ENCODE measurements at regions of chr7 and their contacts with region 1.

Region 1: GRCh38 chr7:112422842-112423496 is 27.3 kb upstream of the IFRD1 start:
- DNase-seq: peak; percentile 90
- H3K4me3 ChIP-seq: no peak overlapping the region
- H3K27ac ChIP-seq: peak overlapping the region; percentile 26
- H3K4me1 ChIP-seq: peaks cover 41% of the 10 kb centered on the region
- H3K27me3 ChIP-seq: no peaks in the 10 kb centered on the region
- CTCF ChIP-seq: no peak

Region 2: DNA sequence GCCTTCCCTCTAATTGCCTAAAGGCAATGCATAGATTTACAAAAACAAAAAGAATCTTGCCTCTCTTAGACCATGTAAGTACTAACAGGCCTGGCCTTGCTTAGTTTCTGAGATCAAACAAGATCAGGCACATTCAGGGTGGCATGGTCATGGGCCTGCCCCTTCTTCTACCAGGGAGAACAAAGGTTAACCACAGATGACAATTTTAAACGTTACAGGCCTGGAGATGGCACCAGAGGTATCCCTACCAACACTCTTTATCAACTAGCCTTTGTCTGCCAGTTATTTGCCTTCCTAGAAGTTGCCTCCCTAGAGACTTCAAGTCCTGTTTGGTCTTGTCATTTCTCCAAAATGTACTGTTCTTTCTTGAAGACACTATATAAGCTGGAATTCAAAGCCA is 469.4 kb before region 1 on chr7:
- CTCF ChIA-PET with region 1: interaction called, 11 read pairs
- dilution Hi-C with region 1: no loop called
- in situ Hi-C with region 1: loop called in 1 of 2 experiments (anchors 25 kb)
- intact Hi-C with region 1: no loop called
- DNase-seq: peak; percentile 92
- H3K4me3 ChIP-seq: no peak overlapping the region
- H3K27ac ChIP-seq: peak overlapping the region; percentile 73
- H3K4me1 ChIP-seq: peaks cover 13% of the 10 kb centered on the region
- H3K27me3 ChIP-seq: no peaks in the 10 kb centered on the region
- CTCF ChIP-seq: peak; percentile 20 to 58

Region 3: GRCh38 chr7:111958896-111959295 is 464.1 kb before region 1 on chr7:
- CTCF ChIA-PET with region 1: interaction called, 11 read pairs
- dilution Hi-C with region 1: no loop called
- in situ Hi-C with region 1: loop called in 1 of 2 experiments (anchors 25 kb)
- intact Hi-C with region 1: no loop called
- DNase-seq: peak; percentile 30
- H3K4me3 ChIP-seq: no peak overlapping the region
- H3K27ac ChIP-seq: no peak overlapping the region
- H3K4me1 ChIP-seq: peaks cover 14% of the 10 kb centered on the region
- H3K27me3 ChIP-seq: no peaks in the 10 kb centered on the region
- CTCF ChIP-seq: no peak

Region 4: DNA sequence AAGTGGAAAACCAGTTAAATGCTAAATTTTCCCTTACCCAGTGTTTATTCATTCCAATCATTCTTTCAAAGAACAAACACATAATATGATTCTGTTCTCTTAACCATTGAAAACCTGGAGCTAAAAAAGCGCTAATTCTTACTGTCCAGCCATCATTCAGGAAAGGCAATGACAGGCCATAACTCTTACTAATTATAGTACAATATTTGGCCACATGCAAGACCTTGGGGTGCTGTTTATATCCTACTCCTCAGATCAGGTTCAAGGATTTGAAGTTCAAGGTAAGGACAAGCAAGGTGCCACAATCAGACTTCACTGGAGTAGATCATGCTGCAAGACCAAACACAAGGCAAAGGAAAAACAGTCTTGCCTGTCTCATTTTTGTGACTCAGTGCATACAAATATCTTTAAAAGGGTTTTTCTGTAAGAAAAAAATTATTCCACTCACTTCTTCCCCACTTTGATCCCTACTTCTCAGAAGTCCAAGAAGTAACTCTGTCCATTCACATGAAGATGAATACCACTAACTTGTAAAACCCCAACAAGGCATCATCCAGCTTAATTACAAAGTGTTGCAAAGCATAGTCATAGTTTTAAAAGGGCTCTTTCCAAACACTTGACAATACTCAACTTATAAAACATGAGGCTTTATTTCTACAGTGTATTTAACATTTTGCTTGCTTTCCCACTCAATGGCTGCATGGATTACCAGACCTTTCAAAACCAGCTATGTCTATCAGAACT is 369.8 kb before region 1 on chr7:
- CTCF ChIA-PET with region 1: no interaction called
- dilution Hi-C with region 1: no loop called
- in situ Hi-C with region 1: no loop called
- intact Hi-C with region 1: no loop called
- DNase-seq: no peak
- H3K4me3 ChIP-seq: no peak overlapping the region
- H3K27ac ChIP-seq: no peak overlapping the region
- H3K4me1 ChIP-seq: no peaks in the 10 kb centered on the region
- H3K27me3 ChIP-seq: no peaks in the 10 kb centered on the region
- CTCF ChIP-seq: no peak

Region 5: DNA sequence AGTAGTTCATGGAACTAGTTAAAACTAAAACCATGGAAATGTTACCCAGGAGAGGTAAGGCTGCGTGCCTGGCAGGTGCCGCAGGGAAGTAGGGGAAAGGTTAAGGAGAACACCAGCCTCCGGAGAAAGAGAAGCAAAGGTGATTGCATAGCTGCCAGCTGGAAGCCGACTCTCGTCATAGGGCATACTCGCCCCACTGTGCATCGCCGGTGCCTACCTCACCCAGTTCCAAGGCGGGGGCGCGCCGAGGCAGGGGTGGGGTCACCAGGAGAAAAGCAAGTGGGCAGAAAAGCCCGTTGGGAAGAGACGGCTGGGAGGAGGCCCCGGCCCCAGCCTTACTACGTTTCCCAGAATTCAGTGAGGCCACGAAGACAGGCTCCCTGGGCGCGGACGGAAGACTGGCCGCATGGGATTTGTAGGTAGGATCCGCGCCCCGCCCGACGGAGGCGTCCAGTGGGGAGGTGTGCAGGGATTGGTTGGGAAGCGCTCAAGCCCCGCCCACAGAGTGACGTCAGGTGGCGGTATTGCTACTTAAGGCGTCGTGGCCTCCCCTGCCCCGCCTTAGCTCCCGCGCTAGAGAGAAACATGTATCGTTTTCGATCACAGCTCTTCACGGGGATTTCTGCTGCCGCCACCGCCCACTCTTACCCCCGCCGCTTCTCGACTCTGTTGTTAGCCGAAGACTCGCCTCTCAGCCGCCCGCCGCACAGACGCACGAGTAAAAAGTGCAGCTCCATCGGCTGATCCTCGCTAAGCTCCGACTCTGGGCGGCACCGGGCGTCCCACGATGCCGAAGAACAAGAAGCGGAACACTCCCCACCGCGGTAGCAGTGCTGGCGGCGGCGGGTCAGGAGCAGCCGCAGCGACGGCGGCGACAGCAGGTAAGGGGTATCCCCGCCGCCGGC is 27.2 kb after region 1 on chr7 and contains the start of gene IFRD1:
- CTCF ChIA-PET with region 1: interaction called, 6 read pairs
- dilution Hi-C with region 1: no loop called
- in situ Hi-C with region 1: no loop called
- intact Hi-C with region 1: loop called (anchors 1 kb)
- DNase-seq: peak; percentile 98
- H3K4me3 ChIP-seq: peak within 1 kb of the TSS; percentile 80 to 100 (median 96)
- H3K27ac ChIP-seq: peak within 1 kb of the TSS; percentile 81
- H3K4me1 ChIP-seq: peaks cover 31% of the 10 kb centered on the region
- H3K27me3 ChIP-seq: no peaks in the 10 kb centered on the region
- CTCF ChIP-seq: no peak
- total RNA-seq, gene IFRD1: 74.2 to 76.2 TPM